BJ (cell line): ENCODE measurements at regions of chr12 and their contacts with region 1.

Region 1: DNA sequence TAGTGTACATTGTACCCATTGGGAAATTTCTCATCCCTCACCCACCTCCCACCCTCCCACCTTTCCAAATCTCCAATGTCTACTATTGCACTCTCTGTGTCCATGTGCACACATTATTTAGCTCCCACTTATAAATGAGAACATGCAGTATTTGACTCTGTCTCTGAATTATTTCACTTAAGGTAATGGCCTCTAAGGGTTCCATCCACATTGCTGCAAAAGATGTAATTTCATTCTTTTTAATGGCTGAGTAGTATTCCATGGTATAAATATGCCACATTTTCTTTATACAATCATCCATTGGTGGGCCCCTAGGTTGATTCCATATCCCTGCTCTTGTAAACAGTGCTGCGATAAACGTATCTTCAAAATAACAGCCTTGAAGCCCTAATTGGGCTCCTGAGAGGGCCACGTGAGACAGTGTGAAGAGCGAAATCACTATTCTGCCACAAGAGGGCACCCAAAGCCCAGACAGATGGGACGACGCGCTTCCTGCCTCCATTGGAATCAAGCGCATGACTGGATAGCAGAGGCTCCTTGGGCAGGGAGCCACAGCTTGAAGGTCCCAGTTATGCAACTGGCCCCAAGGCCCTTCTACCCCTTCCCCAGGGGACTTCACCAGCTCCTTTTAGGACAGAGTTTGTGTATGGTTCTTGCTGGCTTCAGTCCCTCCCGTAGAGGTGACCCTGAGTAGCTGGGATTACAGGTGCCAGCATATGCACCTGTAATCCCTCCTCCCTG is 21.3 kb upstream of the CD27 start:
- DNase-seq: peak; percentile 60
- H3K4me3 ChIP-seq: no peak overlapping the region
- H3K27me3 ChIP-seq: no peaks in the 10 kb centered on the region
- CTCF ChIP-seq: peak; percentile 81

Region 2: DNA sequence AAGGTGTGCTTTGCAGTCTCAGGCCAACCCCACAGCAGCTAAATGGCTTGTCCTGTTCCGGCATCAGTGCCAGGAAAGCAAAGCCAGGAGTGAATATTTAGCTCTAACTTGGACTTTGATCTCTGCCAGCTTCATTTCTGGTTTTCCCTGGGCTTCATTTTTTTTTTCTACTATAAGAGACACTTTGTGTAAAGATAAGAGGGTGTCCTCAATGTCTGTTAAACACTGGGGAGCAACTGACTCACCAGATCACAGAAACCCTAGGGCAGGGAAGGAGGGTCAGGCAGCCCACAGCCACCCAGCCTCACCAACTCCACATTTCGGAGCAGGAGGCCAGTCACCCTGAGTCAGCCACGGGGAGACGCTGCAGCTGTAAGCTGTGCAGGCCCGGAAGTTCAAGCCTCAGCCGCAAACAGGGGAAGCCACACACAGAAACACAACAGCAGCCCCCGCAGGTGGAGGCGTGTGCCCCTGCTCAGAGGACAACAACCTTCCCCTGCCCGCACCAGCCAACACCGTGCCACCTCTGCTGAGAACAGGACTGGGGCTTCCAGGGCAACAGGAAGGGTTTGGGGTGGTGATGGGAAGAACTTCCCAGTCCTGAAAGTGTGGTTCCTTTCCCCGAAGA is 87.9 kb before region 1 on chr12:
- CTCF ChIA-PET with region 1: interaction called, 13 read pairs
- POLR2A ChIA-PET with region 1: no interaction called
- DNase-seq: no peak
- H3K4me3 ChIP-seq: peak overlapping the region; percentile 36
- H3K27me3 ChIP-seq: no peaks in the 10 kb centered on the region
- CTCF ChIP-seq: peak; percentile 75

Region 3: GRCh38 chr12:6461401-6462233 is 38.2 kb after region 1 on chr12:
- CTCF ChIA-PET with region 1: interaction called, 62 read pairs
- POLR2A ChIA-PET with region 1: no interaction called
- DNase-seq: no peak
- H3K4me3 ChIP-seq: no peak overlapping the region
- H3K27me3 ChIP-seq: no peaks in the 10 kb centered on the region
- CTCF ChIP-seq: no peak

Region 4: DNA sequence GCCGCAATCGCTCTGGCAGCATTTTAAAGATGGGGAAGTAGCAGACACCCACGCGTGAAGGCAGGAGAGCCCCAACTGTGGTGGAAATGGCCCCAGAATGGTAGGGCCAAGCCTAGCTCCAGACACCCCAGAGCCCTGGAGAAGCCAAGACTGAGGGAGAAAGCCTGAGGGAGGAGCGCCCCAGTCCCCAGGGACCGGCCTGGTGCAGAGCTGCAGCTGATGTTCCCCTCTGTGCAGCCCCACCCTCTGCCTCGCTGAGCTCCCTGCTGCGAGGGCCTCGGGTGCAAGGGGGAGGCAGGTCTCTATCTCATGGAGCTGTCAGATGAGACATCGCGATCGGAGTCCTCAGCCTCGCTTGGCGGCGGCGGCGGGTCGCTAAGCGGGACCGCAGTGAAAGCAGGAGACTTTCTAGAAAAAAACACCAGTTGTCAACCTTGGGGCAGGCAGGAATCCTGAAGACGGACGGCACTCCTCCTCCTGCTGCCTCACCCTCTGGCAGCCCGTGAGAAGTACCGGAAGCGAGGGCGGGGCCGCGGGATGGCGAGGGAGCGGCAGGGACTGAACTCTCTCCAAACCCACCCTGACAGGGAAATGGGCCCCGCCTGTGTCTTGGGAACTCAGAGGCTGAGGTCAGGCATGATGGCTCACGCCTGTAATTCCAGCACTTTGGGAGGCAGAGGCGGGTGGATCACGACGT is 116.9 kb after region 1 on chr12:
- CTCF ChIA-PET with region 1: interaction called, 11 read pairs
- POLR2A ChIA-PET with region 1: no interaction called
- DNase-seq: peak; percentile 87
- H3K4me3 ChIP-seq: peak overlapping the region; percentile 5; the same call in 1 of the 2 replicates
- H3K27me3 ChIP-seq: no peaks in the 10 kb centered on the region
- CTCF ChIP-seq: no peak